GM18951 (cell line): ENCODE measurements at regions of chr6 and their contacts with region 1.

Region 1: GRCh38 chr6:133923938-133924593 is 29.0 kb upstream of the TBPL1 start:
- POLR2A ChIP-seq: no peak

Region 2: GRCh38 chr6:134063966-134064445 is 139.9 kb after region 1 on chr6:
- in situ Hi-C with region 1: loop called (anchors 10 kb)
- POLR2A ChIP-seq: no peak

Region 3: DNA sequence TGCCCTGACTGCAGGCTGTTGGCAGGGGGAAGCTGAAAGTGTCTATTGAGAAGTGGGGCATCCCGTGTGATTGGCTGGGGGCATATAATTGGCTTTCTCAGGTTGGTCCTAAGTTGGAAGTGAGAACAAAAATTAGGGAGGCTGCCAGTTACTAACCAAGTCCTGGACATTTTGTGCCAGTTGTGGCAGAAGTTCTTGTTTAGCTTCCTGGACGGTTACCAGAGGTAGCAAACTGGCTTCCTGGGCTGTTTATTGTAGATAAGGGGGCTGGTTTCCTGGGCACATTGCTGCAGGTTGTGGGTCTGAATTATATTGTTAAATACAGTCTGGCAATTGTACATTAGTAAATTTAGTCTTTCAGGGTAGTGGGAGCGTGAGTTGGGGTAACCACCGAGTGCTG is 178.9 kb after region 1 on chr6:
- in situ Hi-C with region 1: loop called (anchors 5 kb)
- POLR2A ChIP-seq: no peak

Region 4: DNA sequence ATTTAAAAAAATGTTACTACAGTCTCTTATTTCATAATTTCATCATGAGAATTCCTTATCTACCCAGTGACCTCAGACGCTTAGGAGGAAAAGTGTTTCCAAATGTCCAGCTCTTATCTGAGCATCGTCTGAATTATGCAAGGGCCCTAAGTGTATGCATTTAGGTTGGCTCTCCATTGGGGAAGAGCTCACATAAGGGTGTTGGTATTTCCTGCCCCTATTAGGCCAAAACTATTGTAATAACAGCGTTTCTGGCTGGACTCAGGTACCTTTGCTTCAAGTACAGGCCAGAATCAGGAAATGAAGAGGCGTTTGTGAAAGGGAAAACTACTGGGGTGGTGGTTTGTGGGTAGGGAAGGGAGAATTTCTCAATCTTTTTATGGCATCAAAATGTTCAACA is 434.3 kb after region 1 on chr6:
- in situ Hi-C with region 1: no loop called
- POLR2A ChIP-seq: no peak